IMR-90 (cell line): ENCODE measurements at regions of chr2 and their contacts with region 1.

Region 1: DNA sequence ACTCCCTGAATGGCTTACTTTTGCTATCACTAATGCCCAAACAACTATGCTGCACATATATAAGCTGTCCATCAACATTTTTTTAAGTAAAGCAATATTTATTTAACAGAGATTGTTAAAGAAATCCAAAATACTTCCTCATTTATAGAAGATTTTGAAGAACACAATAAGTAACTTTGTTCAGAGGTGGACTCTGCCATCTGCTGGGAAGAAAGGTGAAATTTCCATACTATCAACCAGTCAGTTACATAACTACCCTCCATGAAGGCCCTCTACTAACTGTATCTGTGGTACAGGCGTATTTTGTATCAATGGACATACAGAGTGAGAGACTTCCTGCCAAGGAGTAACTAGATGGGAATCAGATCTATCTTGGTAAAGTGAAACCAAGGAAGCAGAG is 106.0 kb downstream of the DTNB start:
- DNase-seq: peak; percentile 65
- ATAC-seq: peak; percentile 81
- H3K4me3 ChIP-seq: no peak overlapping the region
- H3K27ac ChIP-seq: no peak overlapping the region
- H3K4me1 ChIP-seq: no peaks in the 10 kb centered on the region
- H3K27me3 ChIP-seq: no peaks in the 10 kb centered on the region
- CTCF ChIP-seq: peak; percentile 70
- POLR2A ChIP-seq: no peak
- RAD21 ChIP-seq: peak; percentile 63

Region 2: GRCh38 chr2:25252281-25253105 is 314.9 kb before region 1 on chr2:
- CTCF ChIA-PET with region 1: no interaction called
- POLR2A ChIA-PET with region 1: no interaction called
- dilution Hi-C with region 1: no loop called
- in situ Hi-C with region 1: no loop called
- intact Hi-C with region 1: loop called (anchors 10 kb)
- DNase-seq: peak; percentile 14
- ATAC-seq: peak; percentile 59
- H3K4me3 ChIP-seq: peak overlapping the region; percentile 23
- H3K27ac ChIP-seq: 0 out of 2 replicates have a peak overlapping the region, but pooled peaks have one; percentile 11
- H3K4me1 ChIP-seq: peaks cover 26% of the 10 kb centered on the region
- H3K27me3 ChIP-seq: no peaks in the 10 kb centered on the region
- CTCF ChIP-seq: no peak
- POLR2A ChIP-seq: no peak
- RAD21 ChIP-seq: no peak

Region 3: GRCh38 chr2:25309402-25309801 is 258.0 kb before region 1 on chr2:
- CTCF ChIA-PET with region 1: no interaction called
- POLR2A ChIA-PET with region 1: no interaction called
- dilution Hi-C with region 1: no loop called
- in situ Hi-C with region 1: no loop called
- intact Hi-C with region 1: loop called (anchors 1 kb)
- DNase-seq: peak; percentile 50
- ATAC-seq: peak; percentile 68
- H3K4me3 ChIP-seq: no peak overlapping the region
- H3K27ac ChIP-seq: no peak overlapping the region
- H3K4me1 ChIP-seq: peaks cover 1% of the 10 kb centered on the region; the same call in 1 of the 2 replicates
- H3K27me3 ChIP-seq: no peaks in the 10 kb centered on the region
- CTCF ChIP-seq: peak; percentile 51
- POLR2A ChIP-seq: no peak
- RAD21 ChIP-seq: peak; percentile 63

Region 4: GRCh38 chr2:25342372-25343186 is 224.8 kb before region 1 on chr2:
- CTCF ChIA-PET with region 1: no interaction called
- POLR2A ChIA-PET with region 1: no interaction called
- dilution Hi-C with region 1: no loop called
- in situ Hi-C with region 1: no loop called
- intact Hi-C with region 1: loop called (anchors 1 kb)
- DNase-seq: peak; percentile 82
- ATAC-seq: peak; percentile 87
- H3K4me3 ChIP-seq: peak overlapping the region; percentile 60
- H3K27ac ChIP-seq: no peak overlapping the region; the same call in 1 of the 2 replicates
- H3K4me1 ChIP-seq: peaks cover 12% of the 10 kb centered on the region; the same call in 1 of the 2 replicates
- H3K27me3 ChIP-seq: no peaks in the 10 kb centered on the region
- CTCF ChIP-seq: peak; percentile 97
- POLR2A ChIP-seq: no peak
- RAD21 ChIP-seq: peak; percentile 72

Region 5: DNA sequence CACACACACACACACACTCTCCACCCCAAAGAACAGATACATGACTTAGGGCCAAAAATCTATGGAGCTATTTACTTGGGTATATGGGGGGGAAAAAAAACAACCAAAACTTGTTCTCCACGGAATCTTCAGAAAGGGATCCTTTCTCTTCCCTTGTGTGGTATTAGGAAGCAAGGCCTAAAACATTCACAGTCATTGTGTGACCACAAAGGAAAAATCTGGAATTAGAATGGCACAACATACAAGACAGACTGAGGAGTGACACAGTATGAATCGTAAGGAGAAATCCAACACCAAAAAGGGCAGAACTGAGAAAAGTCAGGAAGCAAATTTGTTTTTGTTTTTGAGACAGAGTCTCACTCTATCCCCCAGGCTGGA is 240.6 kb after region 1 on chr2:
- CTCF ChIA-PET with region 1: no interaction called
- POLR2A ChIA-PET with region 1: no interaction called
- dilution Hi-C with region 1: no loop called
- in situ Hi-C with region 1: no loop called
- intact Hi-C with region 1: no loop called
- DNase-seq: peak; percentile 65
- ATAC-seq: peak; percentile 49
- H3K4me3 ChIP-seq: no peak overlapping the region
- H3K27ac ChIP-seq: no peak overlapping the region
- H3K4me1 ChIP-seq: no peaks in the 10 kb centered on the region
- H3K27me3 ChIP-seq: no peaks in the 10 kb centered on the region
- CTCF ChIP-seq: no peak
- POLR2A ChIP-seq: no peak
- RAD21 ChIP-seq: no peak